IMR-90 (cell line): ENCODE measurements at regions of chr11 and their contacts with region 1.

Region 1: DNA sequence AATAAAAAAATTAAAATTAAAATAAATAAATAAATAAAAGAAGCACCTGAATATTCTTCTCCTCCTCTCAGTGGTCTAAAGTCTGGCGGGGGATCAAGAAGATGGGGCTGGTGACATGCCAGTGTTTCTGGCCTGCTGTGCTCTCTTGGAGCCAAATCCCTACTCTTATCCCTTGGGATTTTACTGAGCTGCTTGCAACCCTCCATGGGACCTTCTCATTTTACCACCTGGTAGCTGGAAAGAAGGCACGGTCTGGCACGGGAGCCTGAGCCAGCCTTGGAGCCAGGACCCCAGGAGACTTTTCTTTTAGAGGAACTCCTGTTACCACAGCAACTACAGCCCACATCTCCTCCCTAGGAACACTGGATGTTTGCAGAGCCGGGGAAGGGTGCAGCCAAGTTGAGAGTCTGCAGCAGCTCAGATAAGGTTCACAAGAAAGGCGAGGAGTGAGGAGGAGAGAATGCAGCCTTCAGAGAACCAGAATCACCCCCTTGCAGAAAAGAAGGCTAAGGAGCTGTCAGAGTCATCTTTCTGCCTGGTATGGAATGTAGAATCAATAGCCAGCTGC is 21.4 kb downstream of the CD6 start:
- DNase-seq: no peak
- ATAC-seq: no peak
- H3K4me3 ChIP-seq: no peak overlapping the region
- H3K27ac ChIP-seq: no peak overlapping the region
- H3K4me1 ChIP-seq: no peaks in the 10 kb centered on the region
- H3K27me3 ChIP-seq: peaks cover 51% of the 10 kb centered on the region
- CTCF ChIP-seq: no peak
- POLR2A ChIP-seq: no peak
- RAD21 ChIP-seq: no peak

Region 2: GRCh38 chr11:61028272-61028761 is 35.4 kb after region 1 on chr11:
- CTCF ChIA-PET with region 1: no interaction called
- POLR2A ChIA-PET with region 1: no interaction called
- dilution Hi-C with region 1: no loop called
- in situ Hi-C with region 1: no loop called
- intact Hi-C with region 1: no loop called
- DNase-seq: no peak
- ATAC-seq: no peak
- H3K4me3 ChIP-seq: no peak overlapping the region
- H3K27ac ChIP-seq: no peak overlapping the region
- H3K4me1 ChIP-seq: no peaks in the 10 kb centered on the region
- H3K27me3 ChIP-seq: peaks cover 30% of the 10 kb centered on the region
- CTCF ChIP-seq: no peak
- POLR2A ChIP-seq: no peak
- RAD21 ChIP-seq: no peak

Region 3: DNA sequence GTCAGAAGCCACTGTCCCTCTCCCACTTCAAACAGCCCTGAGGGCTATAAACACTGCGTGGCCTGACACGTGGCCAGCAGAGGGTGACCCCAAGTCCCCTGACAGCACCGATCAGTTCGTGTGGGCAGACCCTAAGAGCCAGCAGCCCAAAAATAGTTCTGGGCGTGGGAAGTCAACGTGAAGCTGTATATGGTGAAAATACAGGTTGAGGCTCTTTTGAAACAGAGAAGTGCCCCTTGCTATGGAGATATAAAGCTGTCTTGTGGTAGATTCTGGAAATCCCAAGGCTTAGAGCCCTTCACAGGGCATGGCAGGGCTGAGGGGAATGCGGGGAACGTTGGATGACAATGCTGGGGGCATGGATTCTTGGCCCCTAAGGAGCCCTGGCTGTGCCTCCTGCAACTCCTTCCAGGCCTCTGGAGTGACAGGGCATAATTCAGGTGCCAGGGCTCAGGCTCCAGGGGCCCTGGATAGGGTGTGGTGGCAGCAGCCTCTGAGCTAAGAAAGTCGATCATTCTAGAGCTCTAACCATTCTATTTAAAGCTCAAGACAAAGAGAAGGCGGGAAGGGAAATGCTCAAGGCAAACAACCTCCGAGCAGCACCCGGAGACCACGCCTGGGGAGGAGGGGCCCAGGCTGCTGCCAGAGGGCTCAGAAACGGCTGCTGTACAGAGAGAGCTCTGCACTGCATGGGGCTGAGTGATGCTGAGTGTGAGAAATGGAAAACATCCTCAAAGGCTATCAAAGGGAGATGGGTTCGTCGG is 49.0 kb after region 1 on chr11:
- CTCF ChIA-PET with region 1: no interaction called
- POLR2A ChIA-PET with region 1: no interaction called
- dilution Hi-C with region 1: no loop called
- in situ Hi-C with region 1: no loop called
- intact Hi-C with region 1: loop called (anchors 5 kb)
- DNase-seq: no peak
- ATAC-seq: peak; percentile 40; the same call in 1 of the 2 replicates
- H3K4me3 ChIP-seq: no peak overlapping the region
- H3K27ac ChIP-seq: no peak overlapping the region
- H3K4me1 ChIP-seq: no peaks in the 10 kb centered on the region
- H3K27me3 ChIP-seq: peaks cover 16% of the 10 kb centered on the region
- CTCF ChIP-seq: no peak
- POLR2A ChIP-seq: no peak
- RAD21 ChIP-seq: no peak